Activated naive CD4-positive, alpha-beta T cell treated with anti-CD3 and anti-CD28 coated beads for 36 hours (primary cell): ENCODE measurements at regions of chr3 and their contacts with region 1.

Region 1: GRCh38 chr3:106428565-106428994 is 559.8 kb upstream of the CBLB start:
- DNase-seq: peak; percentile 66
- H3K4me3 Mint-ChIP-seq: no peak overlapping the region
- H3K27ac Mint-ChIP-seq: peak overlapping the region; percentile 81
- H3K4me1 Mint-ChIP-seq: peaks cover 46% of the 10 kb centered on the region
- H3K27me3 Mint-ChIP-seq: no peaks in the 10 kb centered on the region

Region 2: GRCh38 chr3:105676621-105677300 is 751.8 kb before region 1 on chr3:
- CTCF ChIA-PET with region 1: no interaction called
- intact Hi-C with region 1: loop called (anchors 1 kb)
- DNase-seq: peak; percentile 77
- H3K4me3 Mint-ChIP-seq: no peak overlapping the region
- H3K27ac Mint-ChIP-seq: peak overlapping the region; percentile 87
- H3K4me1 Mint-ChIP-seq: peaks cover 18% of the 10 kb centered on the region
- H3K27me3 Mint-ChIP-seq: no peaks in the 10 kb centered on the region

Region 3: DNA sequence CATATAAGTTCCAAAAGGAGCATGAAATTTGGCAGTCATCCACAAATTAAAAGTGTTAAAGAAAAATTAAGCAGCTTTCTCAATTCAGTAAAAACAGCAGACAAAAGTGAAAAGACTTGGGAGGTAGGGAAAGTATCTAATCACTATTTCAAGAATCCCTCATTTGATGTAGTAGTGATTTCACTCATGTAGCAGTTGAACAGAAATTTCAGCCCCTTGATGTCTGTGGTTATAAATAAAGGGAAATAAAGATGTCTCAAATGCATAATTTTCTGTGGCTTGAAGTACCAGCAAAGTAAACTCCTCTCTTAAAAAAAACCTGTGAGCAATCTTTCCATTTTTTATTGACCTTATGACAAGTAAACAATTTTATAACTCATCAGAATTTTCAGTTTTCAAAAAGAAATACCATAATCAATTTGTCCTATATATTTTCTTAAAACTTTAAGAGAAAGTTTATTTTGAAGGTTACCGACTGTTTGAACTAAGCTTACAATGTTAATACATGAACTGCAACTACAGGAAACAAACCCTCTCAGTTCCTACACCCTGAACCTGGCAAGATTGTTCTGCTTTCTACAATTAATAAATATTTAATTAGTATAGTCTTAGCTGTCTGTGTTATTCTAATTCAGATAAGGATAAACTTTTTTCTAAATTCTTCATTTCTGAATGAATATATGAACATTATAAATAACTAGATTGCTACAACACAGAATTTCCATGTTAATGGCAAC is 654.0 kb before region 1 on chr3:
- CTCF ChIA-PET with region 1: no interaction called
- intact Hi-C with region 1: loop called (anchors 10 kb)
- DNase-seq: no peak
- H3K4me3 Mint-ChIP-seq: no peak overlapping the region
- H3K27ac Mint-ChIP-seq: peak overlapping the region; percentile 26
- H3K4me1 Mint-ChIP-seq: peaks cover 74% of the 10 kb centered on the region
- H3K27me3 Mint-ChIP-seq: no peaks in the 10 kb centered on the region

Region 4: GRCh38 chr3:106119614-106120082 is 308.9 kb before region 1 on chr3:
- CTCF ChIA-PET with region 1: no interaction called
- intact Hi-C with region 1: loop called (anchors 1 kb)
- DNase-seq: peak; percentile 57
- H3K4me3 Mint-ChIP-seq: no peak overlapping the region
- H3K27ac Mint-ChIP-seq: peak overlapping the region; percentile 73
- H3K4me1 Mint-ChIP-seq: peaks cover 28% of the 10 kb centered on the region
- H3K27me3 Mint-ChIP-seq: no peaks in the 10 kb centered on the region

Region 5: GRCh38 chr3:106473576-106474475 is 45.2 kb after region 1 on chr3:
- CTCF ChIA-PET with region 1: interaction called, 3 read pairs
- intact Hi-C with region 1: loop called (anchors 1 kb)
- DNase-seq: peak; percentile 10
- H3K4me3 Mint-ChIP-seq: no peak overlapping the region
- H3K27ac Mint-ChIP-seq: peak overlapping the region; percentile 59
- H3K4me1 Mint-ChIP-seq: peaks cover 24% of the 10 kb centered on the region
- H3K27me3 Mint-ChIP-seq: no peaks in the 10 kb centered on the region

Region 6: DNA sequence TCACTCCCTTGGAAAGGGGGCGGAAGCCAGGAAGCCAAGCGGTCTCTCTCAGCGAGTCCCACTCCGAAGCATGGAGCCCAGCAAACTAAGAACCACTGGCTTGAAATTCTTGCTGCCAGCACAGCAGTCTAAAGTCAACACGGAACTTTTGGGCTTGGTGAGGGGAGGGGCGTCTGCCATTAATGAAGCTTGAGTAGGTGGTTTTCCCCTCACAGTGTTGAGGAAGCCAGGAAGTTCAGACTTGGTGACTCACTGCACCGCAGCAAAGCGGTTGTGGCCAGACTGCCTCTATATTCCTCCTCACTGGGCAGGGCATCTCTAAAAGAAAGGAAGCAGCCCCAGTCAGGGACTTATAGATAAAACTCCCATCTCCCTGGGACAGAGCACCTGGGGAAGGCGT is 105.6 kb after region 1 on chr3:
- CTCF ChIA-PET with region 1: no interaction called
- intact Hi-C with region 1: loop called (anchors 1 kb)
- DNase-seq: peak; percentile 69
- H3K4me3 Mint-ChIP-seq: no peak overlapping the region
- H3K27ac Mint-ChIP-seq: no peak overlapping the region
- H3K4me1 Mint-ChIP-seq: peaks cover 15% of the 10 kb centered on the region
- H3K27me3 Mint-ChIP-seq: peaks cover 7% of the 10 kb centered on the region